PC-3 (cell line): ENCODE measurements at regions of chr1 and their contacts with region 1.

Region 1: GRCh38 chr1:37692078-37692833 is at the start of gene CDCA8:
- DNase-seq: peak; percentile 97
- ATAC-seq: peak; percentile 86
- H3K4me3 ChIP-seq: peak within 1 kb of the TSS; percentile 94
- H3K27ac ChIP-seq: peak within 1 kb of the TSS; percentile 41
- H3K4me1 ChIP-seq: peaks cover 20% of the 10 kb centered on the region; the same call in 1 of the 2 replicates
- H3K27me3 ChIP-seq: no peaks in the 10 kb centered on the region
- CTCF ChIP-seq: peak; percentile 62
- total RNA-seq, gene CDCA8: 30.1 and 31.8 TPM in 2 replicates

Region 2: DNA sequence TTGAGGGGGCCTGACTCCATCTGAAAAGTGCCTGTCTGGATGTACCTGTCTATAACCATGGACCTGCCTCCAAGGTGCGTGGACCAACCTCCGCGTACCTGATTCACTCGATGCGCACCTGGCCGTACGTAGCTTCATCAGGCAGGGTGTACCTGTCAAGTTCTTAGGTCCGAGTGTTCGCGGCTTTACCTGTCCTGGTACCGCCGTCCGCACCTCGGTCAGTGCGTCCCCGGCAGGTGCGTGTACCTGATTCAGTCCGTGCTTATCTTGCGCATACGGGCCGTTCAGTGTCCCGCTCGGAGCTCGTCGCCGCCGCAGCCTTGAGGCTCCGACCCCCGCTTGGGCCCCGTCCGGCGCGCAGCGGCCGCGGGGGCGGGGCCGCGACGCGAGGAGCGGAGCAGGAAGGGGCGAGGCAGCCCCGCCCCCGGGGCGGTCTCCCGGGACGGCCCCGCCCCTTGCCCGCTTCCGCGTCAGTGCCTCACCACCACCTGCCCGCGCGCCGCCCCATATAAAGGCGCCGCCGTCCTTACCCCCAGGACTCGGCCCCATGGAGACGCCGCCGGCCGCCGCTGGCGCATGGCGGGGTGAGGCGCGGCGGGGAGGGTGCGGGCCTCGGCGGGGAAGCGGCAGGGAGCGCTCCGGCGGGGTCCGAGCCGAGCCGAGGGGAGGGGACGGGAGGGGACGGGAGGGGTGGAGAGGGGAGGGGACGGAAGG is 218.1 kb before region 1 on chr1 and contains the start of gene ZC3H12A:
- CTCF ChIA-PET with region 1: no interaction called
- POLR2A ChIA-PET with region 1: no interaction called
- intact Hi-C with region 1: loop called (anchors 5 kb)
- DNase-seq: peak; percentile 95
- ATAC-seq: peak; percentile 30
- H3K4me3 ChIP-seq: peak within 1 kb of the TSS; percentile 71
- H3K27ac ChIP-seq: peak within 1 kb of the TSS; percentile 97
- H3K4me1 ChIP-seq: peaks cover 56% of the 10 kb centered on the region
- H3K27me3 ChIP-seq: no peaks in the 10 kb centered on the region
- CTCF ChIP-seq: no peak
- total RNA-seq, gene ZC3H12A: 45.3 and 65.1 TPM in 2 replicates

Region 3: DNA sequence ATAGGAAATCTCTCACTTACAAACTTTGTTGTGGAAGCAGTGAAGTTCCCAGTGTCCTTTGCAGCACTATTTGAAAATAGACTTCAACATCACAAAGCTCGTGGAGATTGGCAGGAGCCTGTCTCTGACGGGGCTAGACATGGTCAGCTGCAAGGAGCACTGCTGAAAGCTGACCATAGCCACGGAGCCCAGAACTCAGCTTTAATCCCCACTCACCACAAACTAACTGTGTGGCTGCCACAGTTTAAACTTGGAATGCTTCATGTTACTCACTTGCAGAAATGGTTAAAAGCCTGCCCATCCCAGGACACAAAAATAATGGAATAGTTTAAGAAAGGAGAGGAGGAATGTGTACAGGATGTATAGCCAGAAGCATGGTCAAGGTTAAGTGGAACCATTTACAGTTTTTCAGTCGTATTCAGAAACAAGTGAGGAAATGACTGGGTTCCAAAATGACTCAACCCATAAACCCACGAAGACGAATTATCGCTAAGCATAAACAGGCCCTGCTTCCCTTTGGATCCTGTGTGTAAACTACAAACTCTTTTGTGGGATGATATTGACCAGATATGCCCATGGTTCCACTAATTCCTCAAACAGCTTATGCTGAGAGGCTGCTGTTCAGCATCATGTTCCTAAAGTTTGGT is 117.3 kb before region 1 on chr1:
- CTCF ChIA-PET with region 1: no interaction called
- POLR2A ChIA-PET with region 1: no interaction called
- intact Hi-C with region 1: loop called (anchors 5 kb)
- DNase-seq: peak; percentile 90
- ATAC-seq: peak; percentile 79
- H3K4me3 ChIP-seq: no peak overlapping the region
- H3K27ac ChIP-seq: peak overlapping the region; percentile 82
- H3K4me1 ChIP-seq: peaks cover 33% of the 10 kb centered on the region
- H3K27me3 ChIP-seq: no peaks in the 10 kb centered on the region
- CTCF ChIP-seq: no peak

Region 4: GRCh38 chr1:37741130-37741529 is 48.9 kb after region 1 on chr1:
- CTCF ChIA-PET with region 1: no interaction called
- POLR2A ChIA-PET with region 1: no interaction called
- intact Hi-C with region 1: loop called (anchors 5 kb)
- DNase-seq: peak; percentile 94
- ATAC-seq: peak; percentile 58
- H3K4me3 ChIP-seq: peak overlapping the region; percentile 19; the same call in 1 of the 2 replicates
- H3K27ac ChIP-seq: no peak overlapping the region
- H3K4me1 ChIP-seq: peaks cover 17% of the 10 kb centered on the region
- H3K27me3 ChIP-seq: no peaks in the 10 kb centered on the region
- CTCF ChIP-seq: no peak

Region 5: GRCh38 chr1:37807555-37808368 is 115.5 kb after region 1 on chr1 and contains the starts of genes C1orf122 and YRDC:
- CTCF ChIA-PET with region 1: no interaction called
- POLR2A ChIA-PET with region 1: interaction called, 4 read pairs
- intact Hi-C with region 1: loop called (anchors 1 kb)
- DNase-seq: peak; percentile 92
- ATAC-seq: peak; percentile 79
- H3K4me3 ChIP-seq: peak within 1 kb of the TSS; percentile 81
- H3K27ac ChIP-seq: 0 out of 2 replicates have a peak within 1 kb of the TSS, but pooled peaks have one; percentile 21
- H3K4me1 ChIP-seq: peaks cover 27% of the 10 kb centered on the region
- H3K27me3 ChIP-seq: no peaks in the 10 kb centered on the region
- CTCF ChIP-seq: no peak
- total RNA-seq, gene C1orf122: 70.1 and 72.5 TPM in 2 replicates
- total RNA-seq, gene YRDC: 41.8 and 51.9 TPM in 2 replicates